GM10248 (cell line): ENCODE measurements at regions of chr1 and their contacts with region 1.

Region 1: DNA sequence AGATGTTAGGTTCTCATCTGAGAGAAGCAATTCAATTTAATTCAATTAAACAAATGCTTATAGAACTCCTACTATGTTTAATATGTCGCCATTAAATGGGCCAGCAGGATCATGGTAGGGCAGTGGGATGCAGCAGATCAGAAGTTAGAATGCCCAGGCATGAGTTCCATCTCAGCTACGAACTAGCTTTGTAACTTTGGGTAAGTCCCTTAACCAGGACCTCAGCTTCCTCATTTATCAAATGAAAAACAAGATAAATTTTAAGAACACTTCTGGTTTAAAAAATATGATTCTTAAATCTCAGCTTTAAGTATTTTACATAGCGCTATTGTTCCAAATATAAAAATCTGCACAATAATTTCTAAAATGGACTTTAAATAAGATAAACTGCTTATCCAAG is 67.5 kb upstream of the GFI1 start:
- DNase-seq: no peak
- CTCF ChIP-seq: no peak

Region 2: DNA sequence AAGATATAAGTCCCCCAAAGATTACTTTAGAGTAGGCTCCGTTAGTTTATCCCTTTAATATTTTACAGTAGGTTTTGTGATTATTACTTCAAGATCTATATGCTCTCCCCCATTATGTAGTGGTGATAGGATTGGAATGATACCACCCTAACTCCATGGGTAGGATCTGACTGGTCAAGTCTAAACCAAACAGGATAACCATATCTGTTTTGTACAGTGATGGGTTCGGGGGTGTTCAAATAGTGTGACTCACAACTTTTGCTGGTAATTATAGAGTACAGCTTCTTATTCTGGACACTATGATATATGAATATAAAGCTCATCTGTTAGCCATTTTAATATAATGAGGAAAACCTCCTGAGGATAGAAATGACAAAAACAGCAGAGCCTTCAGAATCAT is 18.3 kb after region 1 on chr1:
- CTCF ChIA-PET with region 1: interaction called, 10 read pairs
- POLR2A ChIA-PET with region 1: no interaction called
- DNase-seq: no peak
- CTCF ChIP-seq: no peak